ENCODE measurements at regions of chr11 and their contacts with region 1.

Region 1: GRCh38 chr11:75797116-75797515 is 17.9 kb upstream of the UVRAG start:
- DNase-seq: peak in 1 of 2 experiments; percentile 72
- H3K4me3 ChIP-seq: no peak overlapping the region
- H3K27ac ChIP-seq: no peak overlapping the region
- H3K4me1 ChIP-seq: peaks cover 32% of the 10 kb centered on the region
- H3K27me3 ChIP-seq: no peaks in the 10 kb centered on the region
- CTCF ChIP-seq: no peak

Region 2: DNA sequence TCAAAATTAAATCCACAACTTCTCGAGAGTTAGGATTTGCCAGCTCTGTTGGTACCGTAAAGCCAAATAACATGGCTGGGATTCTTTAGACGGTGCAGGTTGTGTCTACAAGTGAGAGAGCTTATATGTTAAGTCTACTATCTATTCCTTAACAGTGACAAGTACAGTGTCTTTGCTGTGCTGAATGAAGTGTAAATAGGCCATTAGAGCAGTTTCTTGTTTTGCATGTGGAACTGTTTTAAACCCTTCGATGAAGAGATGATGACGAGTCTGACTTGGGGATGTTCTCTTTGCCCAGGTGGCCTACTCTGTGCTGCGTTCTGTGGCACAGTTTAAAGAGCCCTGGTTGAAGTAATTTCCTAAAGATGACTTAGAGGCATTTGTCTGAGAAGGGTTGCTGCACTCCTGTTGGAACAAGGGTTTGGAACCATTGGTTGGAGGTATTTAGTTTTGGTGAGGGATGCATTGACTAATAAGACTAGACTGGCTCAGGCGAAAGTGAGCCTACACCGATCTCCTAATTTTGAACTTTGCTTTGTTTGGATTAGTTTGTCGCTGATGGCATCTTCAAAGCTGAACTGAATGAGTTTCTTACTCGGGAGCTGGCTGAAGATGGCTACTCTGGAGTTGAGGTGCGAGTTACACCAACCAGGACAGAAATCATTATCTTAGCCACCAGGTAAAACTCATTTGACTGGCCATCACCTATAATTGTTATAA is 396.8 kb before region 1 on chr11:
- CTCF ChIA-PET with region 1: no interaction called
- POLR2A ChIA-PET with region 1: interaction called, 10 read pairs
- intact Hi-C with region 1: no loop called
- DNase-seq: peak in 1 of 2 experiments; percentile 37
- H3K4me3 ChIP-seq: peak overlapping the region; percentile 95
- H3K27ac ChIP-seq: peak overlapping the region; percentile 95
- H3K4me1 ChIP-seq: peaks cover 28% of the 10 kb centered on the region
- H3K27me3 ChIP-seq: no peaks in the 10 kb centered on the region
- CTCF ChIP-seq: no peak

Region 3: DNA sequence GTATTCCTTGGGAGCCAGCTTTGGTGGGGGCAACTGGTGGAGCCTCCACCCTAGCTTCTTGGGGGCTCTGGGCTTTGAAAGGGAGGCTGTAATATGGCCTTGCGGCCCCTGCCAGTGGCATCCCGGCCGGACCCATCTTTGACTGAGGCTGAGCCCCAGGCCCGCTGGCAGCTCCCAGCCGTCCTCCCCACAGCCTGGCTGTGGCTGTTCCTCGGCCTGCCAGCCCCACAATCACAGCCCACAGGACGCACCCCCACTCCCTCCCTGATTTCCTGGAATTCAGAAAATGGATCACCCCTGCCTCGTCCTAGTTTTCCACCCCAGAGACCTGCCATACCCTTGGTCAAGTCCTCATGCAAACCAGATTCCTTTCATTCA is 211.8 kb before region 1 on chr11:
- CTCF ChIA-PET with region 1: no interaction called
- POLR2A ChIA-PET with region 1: interaction called, 50 read pairs
- intact Hi-C with region 1: no loop called
- DNase-seq: no peak
- H3K4me3 ChIP-seq: no peak overlapping the region
- H3K27ac ChIP-seq: no peak overlapping the region
- H3K4me1 ChIP-seq: peaks cover 7% of the 10 kb centered on the region
- H3K27me3 ChIP-seq: no peaks in the 10 kb centered on the region
- CTCF ChIP-seq: no peak